Naive thymus-derived CD4-positive, alpha-beta T cell (primary cell): ENCODE measurements at regions of chr18 and their contacts with region 1.

Region 1: DNA sequence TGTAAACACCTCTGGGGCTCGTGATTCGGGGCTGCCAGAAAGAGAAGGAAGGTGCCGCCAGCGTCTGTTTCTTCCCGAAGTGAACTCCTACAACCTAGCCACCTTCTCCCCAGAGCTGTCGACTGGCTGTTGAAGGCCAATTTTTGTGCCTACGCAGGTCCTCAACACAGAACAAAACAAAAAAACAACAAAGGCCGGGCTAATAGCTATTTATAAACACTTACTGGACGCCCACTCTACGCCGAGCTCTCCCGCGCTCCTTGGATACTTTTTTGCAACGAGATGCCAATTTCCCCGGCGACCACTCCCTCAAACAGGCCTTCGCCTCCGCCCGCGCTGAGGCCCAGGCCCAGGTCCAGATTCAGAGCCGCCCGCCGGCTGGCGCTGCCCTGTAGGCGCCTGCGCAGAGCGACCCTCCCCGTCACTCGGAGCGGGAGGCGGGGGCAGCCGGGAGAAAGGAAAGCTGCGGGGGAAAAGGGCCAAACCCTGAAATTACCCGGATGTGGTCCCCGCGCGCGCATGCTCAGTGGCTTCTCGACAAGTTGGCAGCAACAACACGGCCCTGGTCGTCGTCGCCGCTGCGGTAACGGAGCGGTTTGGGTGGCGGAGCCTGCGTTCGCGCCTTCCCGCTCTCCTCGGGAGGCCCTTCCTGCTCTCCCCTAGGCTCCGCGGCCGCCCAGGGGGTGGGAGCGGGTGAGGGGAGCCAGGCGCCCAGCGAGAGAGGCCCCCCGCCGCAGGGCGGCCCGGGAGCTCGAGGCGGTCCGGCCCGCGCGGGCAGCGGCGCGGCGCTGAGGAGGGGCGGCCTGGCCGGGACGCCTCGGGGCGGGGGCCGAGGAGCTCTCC is at the start of gene SMAD4:
- DNase-seq: peak; percentile 95 to 99 (median 97)
- ATAC-seq: peak; percentile 89
- H3K4me3 ChIP-seq: peak within 1 kb of the TSS; percentile 63
- H3K4me3 Mint-ChIP-seq: peak within 1 kb of the TSS; percentile 96 to 100 (median 99)
- H3K27ac ChIP-seq: peak within 1 kb of the TSS; percentile 81
- H3K27ac Mint-ChIP-seq: peak within 1 kb of the TSS; percentile 95 to 100 (median 98)
- H3K4me1 ChIP-seq: peaks cover 13 to 40% of the 10 kb centered on the region in 2 donors
- H3K4me1 Mint-ChIP-seq: peaks cover 35 to 62% (median 57%) of the 10 kb centered on the region in 7 donors
- H3K27me3 ChIP-seq: no peaks in the 10 kb centered on the region
- H3K27me3 Mint-ChIP-seq: no peaks in the 10 kb centered on the region
- total RNA-seq, gene SMAD4: 82.5 to 170 (median 92.5) TPM

Region 2: DNA sequence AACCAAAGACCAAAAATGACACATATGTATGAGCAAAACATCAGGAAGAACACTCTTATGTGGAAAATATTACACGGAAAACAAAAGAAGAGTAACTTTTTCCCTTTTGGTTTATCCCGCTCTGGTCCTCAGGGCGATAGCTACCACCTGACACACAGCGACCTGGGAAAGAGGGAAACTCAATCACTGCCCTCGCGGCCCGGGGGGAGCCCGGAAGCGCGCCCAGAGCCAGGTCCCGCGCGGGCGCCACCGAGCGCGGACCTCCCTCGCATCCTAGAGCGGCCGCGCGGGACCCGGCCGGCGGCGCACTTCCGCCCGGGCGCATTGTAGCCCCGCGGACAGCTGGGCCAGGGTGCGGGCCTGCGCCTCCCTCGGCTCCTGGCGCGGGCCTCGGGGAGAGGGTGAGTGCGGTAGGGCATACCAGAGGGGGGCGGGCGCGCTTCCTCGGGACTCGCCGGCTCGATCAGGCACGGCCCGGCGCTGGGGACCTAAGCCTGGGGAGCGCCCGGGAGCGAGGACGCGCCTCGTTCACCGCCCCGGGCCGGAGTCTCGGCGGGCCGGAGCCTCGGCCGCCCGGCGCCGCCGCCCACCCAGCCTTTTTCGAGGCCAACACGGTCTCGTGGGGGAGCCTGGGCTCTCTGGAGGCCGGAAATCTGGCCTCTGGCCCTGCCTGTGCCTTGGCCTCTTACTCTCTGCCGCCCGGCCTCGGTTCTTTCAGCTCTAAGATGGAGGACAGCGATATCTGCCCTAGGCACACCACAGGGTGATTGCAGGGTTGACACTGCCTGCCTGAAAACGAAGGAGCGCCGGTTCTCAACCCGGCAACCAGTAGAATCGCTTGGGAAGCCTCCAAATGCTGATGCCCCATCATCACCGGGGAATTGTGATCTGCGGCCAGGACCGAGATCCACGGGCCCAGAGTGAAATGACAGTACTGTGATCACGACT is 61.9 kb before region 1 on chr18 and contains the start of gene ELAC1:
- CTCF ChIA-PET with region 1: no interaction called
- POLR2A ChIA-PET with region 1: interaction called, 109 read pairs
- intact Hi-C with region 1: loop called (anchors 1 kb)
- DNase-seq: peak; percentile 48 to 75 (median 65)
- ATAC-seq: peak; percentile 93
- H3K4me3 ChIP-seq: peak within 1 kb of the TSS; percentile 80
- H3K4me3 Mint-ChIP-seq: peak within 1 kb of the TSS; percentile 86 to 98 (median 94)
- H3K27ac ChIP-seq: peak within 1 kb of the TSS; percentile 90
- H3K27ac Mint-ChIP-seq: peak within 1 kb of the TSS; percentile 77 to 95 (median 92)
- H3K4me1 ChIP-seq: peaks cover 8 to 13% of the 10 kb centered on the region in 2 donors
- H3K4me1 Mint-ChIP-seq: peaks cover 15 to 35% (median 29%) of the 10 kb centered on the region in 7 donors
- H3K27me3 ChIP-seq: no peaks in the 10 kb centered on the region
- H3K27me3 Mint-ChIP-seq: no peaks in the 10 kb centered on the region
- total RNA-seq, gene ELAC1: 4.3 to 11.2 (median 6.3) TPM

Region 3: DNA sequence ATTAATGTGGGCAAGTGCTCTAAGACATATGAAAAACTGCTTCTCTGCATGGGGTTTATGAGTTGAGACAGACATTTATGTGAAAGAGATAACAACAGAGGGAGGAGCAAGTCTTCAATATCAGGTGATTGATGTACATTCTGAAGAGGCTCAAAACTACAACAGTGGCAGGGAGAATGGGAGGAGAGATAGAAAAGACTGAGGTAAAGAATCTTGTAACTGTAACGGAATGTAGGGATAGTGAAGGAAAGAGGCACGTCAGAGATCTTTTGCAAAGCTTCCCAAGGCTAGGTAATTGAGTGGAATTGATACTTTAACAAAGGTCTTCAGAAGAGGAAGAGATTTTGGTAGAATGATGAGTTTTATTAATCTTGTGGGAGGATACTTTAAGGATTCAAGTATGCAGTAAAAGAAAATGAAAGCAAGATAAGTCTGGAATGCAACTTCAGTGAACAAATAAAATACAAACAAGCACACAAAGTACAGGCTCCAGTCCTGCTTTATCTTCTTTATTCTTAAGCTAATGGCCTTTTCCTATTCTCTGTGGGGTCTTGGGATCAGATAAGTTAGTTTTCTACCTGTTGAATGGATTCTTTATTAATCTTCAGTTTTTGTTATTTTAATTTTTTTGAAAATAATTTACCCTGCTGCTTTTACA is 15.1 kb after region 1 on chr18:
- CTCF ChIA-PET with region 1: interaction called, 3 read pairs
- POLR2A ChIA-PET with region 1: interaction called, 31 read pairs
- intact Hi-C with region 1: loop called in 1 of 2 experiments (anchors 1 kb)
- DNase-seq: no peak
- ATAC-seq: no peak
- H3K4me3 ChIP-seq: no peak overlapping the region
- H3K4me3 Mint-ChIP-seq: peak overlapping the region; percentile 5 to 57 (median 36)
- H3K27ac ChIP-seq: peak overlapping the region; percentile 20
- H3K27ac Mint-ChIP-seq: peak overlapping the region in 8 of 9 donors; percentile 11 to 81 (median 44)
- H3K4me1 ChIP-seq: peaks cover 10 to 33% of the 10 kb centered on the region in 2 donors
- H3K4me1 Mint-ChIP-seq: peaks cover 36 to 76% (median 68%) of the 10 kb centered on the region in 7 donors
- H3K27me3 ChIP-seq: no peaks in the 10 kb centered on the region
- H3K27me3 Mint-ChIP-seq: no peaks in the 10 kb centered on the region